Spleen (tissue), 13 donors: ENCODE measurements at regions of chr15 and their contacts with region 1.

Region 1: GRCh38 chr15:84955089-84955848 is 26.4 kb upstream of the PDE8A start:
- DNase-seq: peak; percentile 79
- H3K4me3 ChIP-seq: peak overlapping the region in 2 of 8 donors; percentile 17 to 27
- H3K27ac ChIP-seq: no peak overlapping the region
- H3K4me1 ChIP-seq: peaks cover 4 to 25% (median 14%) of the 10 kb centered on the region in 6 donors
- H3K27me3 ChIP-seq: peaks cover 0 to 4% (median 0%) of the 10 kb centered on the region in 7 donors
- CTCF ChIP-seq: peak; percentile 47 to 83 (median 69)
- POLR2A ChIP-seq: no peak

Region 2: DNA sequence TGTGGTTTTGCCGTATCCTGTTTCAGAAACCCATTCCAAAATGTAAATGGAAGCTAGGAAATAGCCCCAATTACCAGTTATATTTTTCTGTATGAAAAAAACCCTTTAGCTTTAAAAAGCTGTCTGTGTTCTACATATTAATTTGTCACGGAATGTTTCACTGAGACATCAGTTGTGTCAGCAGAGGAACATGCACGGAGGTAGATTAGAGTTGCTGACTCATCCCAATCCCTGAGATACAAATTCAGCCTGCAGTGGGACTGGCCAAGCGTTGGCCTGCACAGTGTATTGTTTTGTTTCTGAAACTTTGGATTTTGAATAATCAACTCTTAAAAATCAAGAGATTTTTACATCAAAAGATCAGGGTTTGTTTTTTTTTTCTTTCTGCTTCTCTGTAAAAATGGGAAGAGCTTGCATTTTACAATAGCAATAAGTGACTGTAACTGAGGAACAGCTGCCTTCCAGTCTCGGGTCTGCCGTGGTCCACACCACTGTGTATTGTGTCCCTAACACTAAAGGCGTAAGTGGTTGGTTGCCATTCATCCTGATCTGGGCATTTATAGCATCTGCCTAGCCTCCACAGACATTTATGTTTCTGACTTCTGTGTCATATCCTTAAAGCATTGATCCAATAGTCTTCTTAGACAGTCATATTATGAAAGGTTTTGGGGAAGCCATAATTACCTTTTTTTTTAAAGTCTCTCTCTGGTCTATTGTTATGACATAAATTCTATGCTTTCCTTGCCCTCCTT is 1083.3 kb before region 1 on chr15:
- intact Hi-C with region 1: no loop called
- DNase-seq: no peak
- H3K4me3 ChIP-seq: no peak overlapping the region
- H3K27ac ChIP-seq: no peak overlapping the region
- H3K4me1 ChIP-seq: no peaks in the 10 kb centered on the region
- H3K27me3 ChIP-seq: peaks cover 0 to 27% (median 0%) of the 10 kb centered on the region in 7 donors
- CTCF ChIP-seq: no peak
- POLR2A ChIP-seq: no peak

Region 3: GRCh38 chr15:84818261-84819131 is 136.8 kb before region 1 on chr15:
- intact Hi-C with region 1: no loop called
- DNase-seq: peak; percentile 36
- H3K4me3 ChIP-seq: no peak overlapping the region
- H3K27ac ChIP-seq: peak overlapping the region in 7 of 8 donors; percentile 28 to 65 (median 46)
- H3K4me1 ChIP-seq: peaks cover 0 to 64% (median 29%) of the 10 kb centered on the region in 6 donors
- H3K27me3 ChIP-seq: peaks cover 0 to 23% (median 10%) of the 10 kb centered on the region in 7 donors
- CTCF ChIP-seq: no peak
- POLR2A ChIP-seq: no peak

Region 4: GRCh38 chr15:84904419-84904818 is 50.9 kb before region 1 on chr15:
- intact Hi-C with region 1: no loop called
- DNase-seq: no peak
- H3K4me3 ChIP-seq: no peak overlapping the region
- H3K27ac ChIP-seq: no peak overlapping the region
- H3K4me1 ChIP-seq: no peaks in the 10 kb centered on the region
- H3K27me3 ChIP-seq: no peaks in the 10 kb centered on the region
- CTCF ChIP-seq: no peak
- POLR2A ChIP-seq: no peak

Region 5: DNA sequence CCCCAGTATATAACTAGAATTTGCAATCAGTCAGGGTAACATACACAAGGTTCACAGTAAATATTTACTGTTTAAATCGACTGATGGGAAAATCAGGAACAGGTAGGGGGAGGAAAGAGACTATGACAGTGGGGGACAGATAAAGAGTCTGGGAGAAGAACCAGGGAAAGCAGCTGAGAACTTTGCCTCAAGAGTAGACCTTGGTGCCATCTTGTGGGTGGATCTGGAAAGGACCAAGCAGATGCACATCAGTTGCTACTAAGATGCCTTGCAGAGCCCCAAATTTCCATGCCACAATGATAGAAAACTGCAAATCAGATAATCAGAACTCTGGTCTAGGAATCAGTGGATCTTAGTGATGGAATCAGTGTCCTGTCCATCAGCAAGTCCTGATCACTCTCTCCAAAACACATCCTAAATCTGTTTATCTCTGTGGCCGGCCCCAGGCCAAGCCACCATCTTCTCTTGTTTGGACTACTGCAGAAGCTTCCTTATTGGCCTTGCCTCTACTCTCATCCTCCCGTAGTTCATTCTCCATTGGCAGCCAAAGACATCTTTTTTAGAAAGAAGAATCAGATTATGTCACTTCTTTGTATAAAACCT is 89.1 kb after region 1 on chr15:
- intact Hi-C with region 1: loop called (anchors 2 kb)
- DNase-seq: no peak
- H3K4me3 ChIP-seq: no peak overlapping the region
- H3K27ac ChIP-seq: no peak overlapping the region
- H3K4me1 ChIP-seq: peaks cover 10 to 54% (median 22%) of the 10 kb centered on the region in 6 donors
- H3K27me3 ChIP-seq: no peaks in the 10 kb centered on the region
- CTCF ChIP-seq: peak; percentile 27 to 76 (median 59)
- POLR2A ChIP-seq: no peak